Cardiac septum (tissue), 1 donor: ENCODE measurements at regions of chr3 and their contacts with region 1.

Region 1: DNA sequence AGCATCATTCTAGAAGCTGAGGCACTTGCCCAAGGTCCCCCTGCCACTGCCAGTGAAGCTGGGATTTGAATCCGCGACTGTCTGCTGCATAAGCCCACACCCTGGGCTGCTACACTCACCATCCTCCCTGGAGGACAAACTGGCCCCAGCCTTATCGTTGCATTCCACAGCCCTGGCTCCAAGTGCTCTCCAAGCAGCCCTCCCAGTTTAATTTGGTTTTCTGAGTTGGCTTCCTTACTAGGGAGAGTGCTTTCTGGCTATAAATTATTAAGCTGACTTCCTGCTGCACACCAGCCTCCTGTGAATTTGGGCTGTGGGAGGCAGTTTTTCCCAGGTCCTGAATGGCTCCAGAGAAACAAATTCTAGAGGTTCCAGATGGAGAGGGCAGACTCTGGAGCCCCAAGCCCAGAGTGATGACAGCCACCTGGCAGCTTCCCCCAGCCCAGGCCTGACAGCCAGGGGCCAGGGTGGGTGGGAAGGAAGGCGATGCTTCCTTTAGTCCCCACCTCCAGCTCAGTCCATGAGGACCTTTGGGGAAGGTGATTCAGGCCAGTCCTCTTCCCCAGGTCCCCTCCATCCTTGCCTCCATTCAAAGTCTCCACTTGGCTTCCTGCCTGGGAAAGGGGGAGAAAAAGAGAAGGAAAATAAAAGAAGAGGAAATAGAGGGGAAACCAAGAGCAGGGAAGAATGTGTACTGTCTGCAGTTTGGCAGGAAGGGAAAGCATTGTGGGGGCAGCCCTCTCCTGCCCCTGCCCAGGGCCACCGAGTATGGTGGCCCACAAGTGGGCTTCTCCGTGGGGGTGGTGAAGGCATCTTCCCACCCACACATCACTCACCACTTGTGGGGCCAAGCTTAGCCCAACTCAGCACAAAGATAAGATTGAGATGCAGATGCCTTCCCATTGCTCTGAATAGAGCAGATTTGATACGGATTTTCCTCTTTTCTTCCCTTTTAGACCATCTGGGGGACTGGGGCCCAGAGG is 69.6 kb downstream of the SEMA5B start:
- DNase-seq: no peak

Region 2: GRCh38 chr3:122969585-122970453 is 11.8 kb after region 1 on chr3:
- intact Hi-C with region 1: loop called (anchors 1 kb)
- DNase-seq: no peak

Region 3: DNA sequence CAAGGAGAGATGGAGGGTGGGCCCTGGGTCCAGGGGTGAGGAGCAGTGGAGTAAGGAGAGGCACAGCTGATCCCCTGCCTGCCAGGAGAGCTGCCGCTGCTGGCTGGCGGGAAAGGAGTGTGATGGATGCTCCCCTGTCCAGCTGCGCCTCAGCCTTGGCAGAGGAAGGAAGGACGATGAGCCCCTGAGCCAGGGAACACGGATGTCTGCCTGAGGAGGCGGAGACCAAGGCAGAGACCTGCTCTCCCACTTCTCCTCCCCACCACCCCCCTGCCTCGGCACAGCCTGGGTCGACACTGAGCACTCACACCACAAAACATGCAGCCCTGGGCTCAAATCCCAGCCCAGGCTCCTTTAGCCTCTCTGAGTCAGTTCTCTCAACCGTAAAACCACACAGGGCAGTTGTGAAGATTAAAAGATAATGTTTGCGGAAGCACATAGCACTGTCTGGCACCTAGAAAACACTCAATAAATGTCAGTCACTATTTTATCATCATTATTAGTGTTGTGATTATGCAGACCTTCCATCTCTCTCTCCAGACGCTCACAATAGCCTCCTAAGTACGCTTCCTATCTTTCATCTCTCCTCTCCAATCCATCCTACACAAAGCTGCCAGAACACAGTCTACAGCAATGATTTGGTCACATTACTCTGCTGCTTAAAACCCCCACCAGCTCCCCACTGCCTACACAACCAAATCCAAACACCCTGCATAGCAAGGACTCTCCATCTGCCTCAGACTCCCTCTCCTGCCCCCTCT is 17.3 kb after region 1 on chr3:
- intact Hi-C with region 1: loop called (anchors 1 kb)
- DNase-seq: no peak

Region 4: DNA sequence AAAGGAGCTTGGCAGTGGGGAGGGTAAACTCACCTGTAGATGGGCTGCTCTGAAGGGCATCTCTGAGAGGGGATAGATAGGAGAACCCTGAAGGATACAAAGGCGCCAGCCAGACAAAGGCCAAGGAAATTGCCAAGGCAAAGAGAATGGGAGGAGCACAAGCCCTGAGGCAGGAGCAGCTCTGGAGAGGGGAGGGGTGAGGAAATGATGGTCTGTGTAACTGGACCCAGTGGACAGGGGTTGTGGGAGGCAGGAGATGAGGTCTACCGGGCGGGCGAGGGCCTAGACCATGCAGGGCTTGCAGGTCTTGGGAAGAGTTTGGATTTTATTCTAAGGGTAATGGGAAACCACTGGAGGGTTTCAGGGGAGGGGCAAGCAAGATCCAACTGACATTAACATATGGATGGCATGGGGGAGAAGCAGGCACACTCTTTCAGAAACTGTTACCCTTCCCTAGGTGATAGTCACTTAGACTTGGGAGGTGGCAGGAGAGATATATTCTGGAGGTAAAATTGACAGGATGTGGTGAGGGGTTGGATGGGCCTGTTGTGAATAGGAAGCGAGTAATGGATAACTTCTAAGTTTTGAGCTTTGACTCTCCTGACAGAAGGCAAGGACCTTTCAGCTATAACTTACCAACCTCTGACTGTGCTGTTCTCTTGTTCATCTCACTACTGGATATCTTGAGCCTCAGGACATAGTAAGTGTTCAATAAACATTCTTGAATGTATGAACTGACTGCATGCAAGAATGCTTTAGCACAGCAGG is 106.7 kb after region 1 on chr3:
- intact Hi-C with region 1: no loop called
- DNase-seq: no peak

Region 5: GRCh38 chr3:123258811-123259420 is 300.9 kb after region 1 on chr3:
- intact Hi-C with region 1: no loop called
- DNase-seq: no peak